ENCODE measurements at regions of chr5 and their contacts with region 1.

Region 1: DNA sequence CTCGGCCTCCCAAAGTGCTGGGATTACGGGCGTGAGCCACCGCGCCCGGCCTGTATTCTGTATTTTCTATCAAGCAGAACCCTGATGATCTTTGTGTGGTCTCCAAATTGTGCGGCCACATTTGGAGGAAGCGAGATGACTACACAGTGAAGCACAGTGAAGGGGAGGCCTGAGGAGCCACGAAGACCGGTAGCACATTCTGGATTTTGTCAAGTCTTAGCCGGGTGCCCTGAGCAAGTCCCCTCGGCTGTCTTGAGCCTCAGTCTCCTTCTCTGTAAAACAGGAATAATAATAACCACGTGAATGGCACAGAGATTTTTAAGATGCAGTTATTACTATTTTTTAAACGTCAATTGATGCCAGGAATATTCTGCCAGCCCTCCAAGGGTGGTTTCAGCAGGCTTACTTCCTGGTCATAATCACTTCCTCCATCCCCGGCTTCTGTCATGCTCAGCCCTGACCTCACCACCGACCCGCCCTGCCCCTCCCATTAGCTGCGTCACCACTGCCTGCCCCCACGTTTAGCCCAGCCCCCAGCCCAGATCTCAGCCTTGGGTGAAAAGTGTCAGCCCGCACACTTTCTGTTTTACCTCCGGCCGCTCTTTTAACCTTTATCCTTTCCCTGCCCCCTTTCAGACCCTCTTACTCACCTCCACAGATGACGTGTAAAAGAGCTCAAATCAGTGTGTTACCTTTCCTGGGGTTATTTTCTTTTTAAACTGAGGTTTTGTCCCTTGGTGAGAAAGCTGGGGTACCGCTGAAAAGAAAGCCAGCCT is 27.0 kb upstream of the ERGIC1 start:
- DNase-seq: peak; percentile 75
- ATAC-seq: peak; percentile 95
- H3K4me3 ChIP-seq: no peak overlapping the region
- H3K27ac ChIP-seq: peak overlapping the region; percentile 84
- H3K4me1 ChIP-seq: peaks cover 20% of the 10 kb centered on the region
- H3K27me3 ChIP-seq: no peaks in the 10 kb centered on the region
- CTCF ChIP-seq: no peak

Region 2: GRCh38 chr5:172697123-172698121 is 109.7 kb before region 1 on chr5:
- CTCF ChIA-PET with region 1: no interaction called
- POLR2A ChIA-PET with region 1: no interaction called
- intact Hi-C with region 1: no loop called
- DNase-seq: peak; percentile 89
- ATAC-seq: peak; percentile 80
- H3K4me3 ChIP-seq: peak overlapping the region; percentile 69
- H3K27ac ChIP-seq: no peak overlapping the region
- H3K4me1 ChIP-seq: 0 out of 2 replicates have a peak, but pooled peaks cover 5% of the 10 kb centered on the region
- H3K27me3 ChIP-seq: peaks cover 15% of the 10 kb centered on the region
- CTCF ChIP-seq: peak; percentile 92

Region 3: DNA sequence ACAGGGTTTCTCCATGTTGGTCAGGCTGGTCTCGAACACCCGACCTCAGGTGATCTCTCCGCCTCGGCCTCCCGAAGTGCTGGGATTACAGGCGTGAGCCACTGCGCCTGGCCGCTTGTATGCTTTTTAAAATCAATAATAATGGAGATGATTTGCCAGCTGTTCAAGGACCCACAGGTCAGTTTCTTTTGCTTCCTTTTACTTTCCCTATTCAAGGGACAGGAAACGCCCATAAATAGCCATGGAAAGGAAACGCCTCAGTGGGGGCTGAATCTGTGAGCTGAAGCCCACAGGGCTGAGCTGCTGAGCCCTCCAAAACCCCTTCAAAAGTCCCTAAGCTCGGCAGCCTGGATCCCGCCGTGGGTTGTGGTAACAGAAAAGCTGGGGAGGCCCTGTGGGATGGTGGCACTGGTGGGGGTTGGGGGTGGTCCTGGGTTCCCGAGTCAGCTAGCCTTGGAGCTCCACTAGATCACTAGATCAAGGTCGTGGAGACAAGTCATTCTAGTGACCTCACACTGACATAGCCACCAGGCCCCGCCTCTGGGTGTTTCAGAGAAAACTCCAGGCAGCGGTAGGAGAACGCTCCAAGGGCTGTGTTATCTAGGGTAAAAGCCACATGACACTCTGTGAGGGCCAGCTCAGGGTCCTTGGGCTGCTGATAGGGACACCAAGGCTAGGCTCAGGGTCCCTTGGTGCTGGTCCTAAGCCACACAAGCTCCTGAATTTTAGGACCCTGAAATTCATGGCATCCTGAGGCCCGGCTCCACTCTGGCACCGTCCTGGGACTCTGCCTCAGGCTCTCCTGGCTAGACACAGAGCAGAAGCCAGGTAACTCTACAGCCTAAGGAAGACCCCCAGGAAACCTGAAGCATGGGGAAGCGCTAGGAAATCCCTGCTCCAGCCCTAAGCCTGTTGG is 18.1 kb before region 1 on chr5:
- CTCF ChIA-PET with region 1: no interaction called
- POLR2A ChIA-PET with region 1: interaction called, 10 read pairs
- intact Hi-C with region 1: no loop called
- DNase-seq: no peak
- ATAC-seq: no peak
- H3K4me3 ChIP-seq: no peak overlapping the region
- H3K27ac ChIP-seq: no peak overlapping the region
- H3K4me1 ChIP-seq: peaks cover 17% of the 10 kb centered on the region
- H3K27me3 ChIP-seq: no peaks in the 10 kb centered on the region
- CTCF ChIP-seq: no peak

Measured in PC-3 (cell line).